ENCODE measurements at regions of chr2 and their contacts with region 1.

Region 1: GRCh38 chr2:6773007-6773693 is 92.6 kb downstream of the CMPK2 start:
- DNase-seq: peak; percentile 41 to 48
- ATAC-seq: peak; percentile 90 to 97
- H3K4me3 ChIP-seq: no peak overlapping the region
- H3K27ac ChIP-seq: no peak overlapping the region
- H3K4me1 ChIP-seq: no peaks in the 10 kb centered on the region
- CTCF ChIP-seq: peak; percentile 92
- EP300 ChIP-seq: no peak
- POLR2A ChIP-seq: no peak
- RAD21 ChIP-seq: peak; percentile 94 to 96

Region 2: GRCh38 chr2:6352906-6353515 is 420.1 kb before region 1 on chr2:
- CTCF ChIA-PET with region 1: interaction called, 10 read pairs
- POLR2A ChIA-PET with region 1: no interaction called
- DNase-seq: peak in 1 of 2 experiments; percentile 43
- ATAC-seq: peak in 1 of 2 experiments; percentile 80; a peak in 3 of 6 replicates
- H3K4me3 ChIP-seq: no peak overlapping the region
- H3K27ac ChIP-seq: no peak overlapping the region
- H3K4me1 ChIP-seq: no peaks in the 10 kb centered on the region
- CTCF ChIP-seq: 0 out of 3 replicates have a peak, but pooled peaks have one; percentile 12
- EP300 ChIP-seq: no peak
- POLR2A ChIP-seq: no peak
- RAD21 ChIP-seq: peak; percentile 29 to 48; a peak in 3 of 5 replicates

Region 3: DNA sequence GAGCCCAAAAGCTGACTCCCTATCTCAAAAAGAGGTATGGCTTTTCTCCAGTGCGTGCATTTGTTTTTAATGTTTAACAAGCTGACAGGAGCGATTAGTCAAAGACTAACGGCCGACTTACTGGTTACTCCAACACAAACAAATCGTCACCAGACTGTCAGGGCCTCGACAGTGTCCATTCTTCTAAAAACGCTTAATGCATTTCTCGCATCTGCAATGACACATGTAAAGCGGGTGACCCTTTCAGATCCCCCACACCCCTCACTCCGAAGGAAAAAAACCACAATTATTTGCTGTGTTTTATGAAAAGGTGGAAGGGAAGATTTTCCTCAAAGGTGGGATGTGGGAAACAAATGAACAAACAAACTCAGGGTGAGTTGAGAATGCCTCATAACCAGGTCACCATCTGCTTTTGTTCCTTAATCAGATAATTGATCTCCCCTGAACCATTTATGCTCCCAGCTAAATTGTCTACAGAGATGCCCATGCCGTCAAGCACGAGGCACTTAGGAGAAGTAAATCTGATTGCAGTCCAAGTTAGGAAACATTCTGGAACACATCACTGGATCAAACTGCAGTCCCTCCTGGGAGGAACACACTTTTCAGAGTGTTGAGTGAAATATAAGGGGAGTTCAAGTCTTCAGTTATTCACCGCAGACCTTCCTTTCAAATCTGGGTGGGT is 248.3 kb before region 1 on chr2:
- CTCF ChIA-PET with region 1: no interaction called
- POLR2A ChIA-PET with region 1: no interaction called
- DNase-seq: no peak
- ATAC-seq: no peak
- H3K4me3 ChIP-seq: no peak overlapping the region
- H3K27ac ChIP-seq: no peak overlapping the region
- H3K4me1 ChIP-seq: no peaks in the 10 kb centered on the region
- CTCF ChIP-seq: no peak
- EP300 ChIP-seq: no peak
- POLR2A ChIP-seq: no peak
- RAD21 ChIP-seq: no peak

Region 4: DNA sequence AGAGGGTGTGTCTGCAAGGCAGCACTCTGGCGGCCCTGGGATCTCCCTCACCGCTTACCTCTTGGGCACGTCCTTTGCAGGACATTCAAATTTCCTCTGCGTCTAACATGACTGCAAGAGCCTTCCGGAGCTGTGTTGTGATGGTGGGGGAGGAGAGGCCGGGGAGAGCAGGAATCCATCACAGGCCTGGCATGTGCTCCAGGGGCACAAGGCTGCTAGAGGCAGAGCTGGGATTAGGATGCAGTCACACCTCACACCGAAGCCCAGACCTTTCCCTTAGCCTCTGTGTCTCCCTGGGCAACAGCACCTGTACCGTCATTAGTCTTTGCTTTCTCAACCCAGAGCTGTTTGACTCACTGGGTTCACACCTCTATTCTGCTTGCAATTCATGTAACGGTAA is 18.7 kb before region 1 on chr2:
- CTCF ChIA-PET with region 1: interaction called, 14 read pairs
- POLR2A ChIA-PET with region 1: no interaction called
- DNase-seq: no peak
- ATAC-seq: no peak
- H3K4me3 ChIP-seq: no peak overlapping the region
- H3K27ac ChIP-seq: no peak overlapping the region
- H3K4me1 ChIP-seq: no peaks in the 10 kb centered on the region
- CTCF ChIP-seq: no peak
- EP300 ChIP-seq: no peak
- POLR2A ChIP-seq: no peak
- RAD21 ChIP-seq: no peak

Region 5: GRCh38 chr2:6784292-6784691 is 11.1 kb after region 1 on chr2:
- CTCF ChIA-PET with region 1: interaction called, 44 read pairs
- POLR2A ChIA-PET with region 1: no interaction called
- DNase-seq: no peak
- ATAC-seq: no peak
- H3K4me3 ChIP-seq: no peak overlapping the region
- H3K27ac ChIP-seq: no peak overlapping the region
- H3K4me1 ChIP-seq: no peaks in the 10 kb centered on the region
- CTCF ChIP-seq: no peak
- EP300 ChIP-seq: no peak
- POLR2A ChIP-seq: no peak
- RAD21 ChIP-seq: no peak

Region 6: GRCh38 chr2:6791679-6792078 is 18.5 kb after region 1 on chr2:
- CTCF ChIA-PET with region 1: interaction called, 44 read pairs
- POLR2A ChIA-PET with region 1: no interaction called
- DNase-seq: peak in 1 of 2 experiments; percentile 27
- ATAC-seq: peak; percentile 69 to 84; a peak in 4 of 6 replicates
- H3K4me3 ChIP-seq: no peak overlapping the region
- H3K27ac ChIP-seq: no peak overlapping the region
- H3K4me1 ChIP-seq: no peaks in the 10 kb centered on the region
- CTCF ChIP-seq: no peak
- EP300 ChIP-seq: no peak
- POLR2A ChIP-seq: no peak
- RAD21 ChIP-seq: no peak